Caco-2 (cell line): ENCODE measurements at regions of chr20 and their contacts with region 1.

Region 1: GRCh38 chr20:531608-532007 is 12.0 kb downstream of the CSNK2A1 start:
- DNase-seq: no peak
- H3K4me3 ChIP-seq: no peak overlapping the region
- H3K4me3 Mint-ChIP-seq: no peak overlapping the region
- H3K27ac Mint-ChIP-seq: no peak overlapping the region
- H3K4me1 ChIP-seq: peaks cover 31% of the 10 kb centered on the region
- H3K4me1 Mint-ChIP-seq: peaks cover 36% of the 10 kb centered on the region
- H3K27me3 ChIP-seq: no peaks in the 10 kb centered on the region
- H3K27me3 Mint-ChIP-seq: no peaks in the 10 kb centered on the region
- CTCF ChIP-seq: no peak

Region 2: DNA sequence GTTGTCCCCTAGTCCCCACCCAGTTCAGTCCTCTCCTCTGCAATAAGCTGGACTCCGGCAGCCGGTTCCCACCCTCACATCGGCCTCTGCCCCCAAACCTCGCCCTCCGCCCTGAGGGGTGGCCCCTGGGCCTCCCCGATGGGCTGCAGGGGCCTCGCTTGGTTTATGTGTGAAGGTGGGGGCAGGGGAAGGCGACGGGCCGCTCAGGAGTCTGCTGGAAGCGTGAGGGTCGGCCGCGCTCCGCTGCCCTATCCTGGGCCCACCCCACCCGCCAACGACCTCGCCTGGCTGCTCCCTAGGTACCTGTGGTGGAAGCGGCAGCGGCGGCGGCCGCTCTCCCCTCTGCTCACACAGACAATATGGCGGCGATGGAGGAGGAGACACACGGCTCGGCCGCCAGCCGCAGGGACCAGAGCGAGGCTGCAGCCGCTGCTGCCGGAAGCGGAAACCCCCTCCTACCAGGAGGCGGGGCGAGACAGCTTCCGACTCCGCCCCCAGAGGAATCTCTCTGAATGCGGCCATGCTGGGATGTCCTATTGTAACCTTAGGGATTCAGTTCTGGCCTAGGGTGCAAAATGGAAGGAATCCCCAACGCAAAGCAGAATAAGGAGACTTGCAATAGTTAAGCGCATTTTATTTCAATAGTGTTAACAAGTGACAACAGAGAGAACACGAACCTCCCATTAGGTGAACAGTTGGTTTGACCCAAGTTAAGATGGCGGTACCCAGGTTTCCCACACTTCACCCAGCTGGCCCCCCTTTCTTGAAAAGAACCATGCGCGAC is 12.0 kb after region 1 on chr20 and contains the start of gene CSNK2A1:
- CTCF ChIA-PET with region 1: no interaction called
- POLR2A ChIA-PET with region 1: no interaction called
- intact Hi-C with region 1: loop called (anchors 1 kb)
- DNase-seq: peak; percentile 96 to 97
- H3K4me3 ChIP-seq: peak within 1 kb of the TSS; percentile 96
- H3K4me3 Mint-ChIP-seq: peak within 1 kb of the TSS; percentile 78
- H3K27ac Mint-ChIP-seq: peak within 1 kb of the TSS; percentile 16
- H3K4me1 ChIP-seq: peaks cover 7% of the 10 kb centered on the region
- H3K4me1 Mint-ChIP-seq: peaks cover 23% of the 10 kb centered on the region
- H3K27me3 ChIP-seq: no peaks in the 10 kb centered on the region
- H3K27me3 Mint-ChIP-seq: peaks cover 7% of the 10 kb centered on the region
- CTCF ChIP-seq: no peak
- total RNA-seq, gene CSNK2A1: 188 and 205 TPM in 2 replicates

Region 3: DNA sequence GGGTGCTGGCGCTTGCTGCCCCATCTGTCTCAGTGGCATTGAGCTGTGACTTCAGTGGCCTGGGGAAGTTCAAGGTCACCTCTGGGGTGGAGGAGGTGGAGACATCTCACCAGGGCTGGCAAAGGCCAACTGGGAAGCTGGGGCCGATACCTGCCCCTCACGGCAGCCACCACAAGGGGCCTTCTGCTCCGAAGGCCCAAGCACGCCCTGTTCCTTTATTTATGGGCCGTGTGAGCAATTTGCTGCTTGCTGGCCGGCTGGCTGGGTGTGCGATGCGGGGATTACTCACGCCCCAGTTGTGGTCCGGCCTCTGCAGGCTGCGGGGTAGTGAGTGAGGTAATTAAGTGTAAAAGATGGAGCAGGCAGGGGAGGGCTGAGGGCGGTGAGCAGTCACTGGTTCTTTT is 157.2 kb after region 1 on chr20:
- CTCF ChIA-PET with region 1: no interaction called
- POLR2A ChIA-PET with region 1: no interaction called
- intact Hi-C with region 1: no loop called
- DNase-seq: no peak
- H3K4me3 ChIP-seq: no peak overlapping the region
- H3K4me3 Mint-ChIP-seq: no peak overlapping the region
- H3K27ac Mint-ChIP-seq: no peak overlapping the region
- H3K4me1 ChIP-seq: no peaks in the 10 kb centered on the region
- H3K4me1 Mint-ChIP-seq: no peaks in the 10 kb centered on the region
- H3K27me3 ChIP-seq: peaks cover 1% of the 10 kb centered on the region; the same call in 1 of the 2 replicates
- H3K27me3 Mint-ChIP-seq: peaks cover 17% of the 10 kb centered on the region
- CTCF ChIP-seq: no peak

Region 4: GRCh38 chr20:768426-768978 is 236.9 kb after region 1 on chr20 and contains the start of gene SLC52A3:
- CTCF ChIA-PET with region 1: no interaction called
- POLR2A ChIA-PET with region 1: no interaction called
- intact Hi-C with region 1: no loop called
- DNase-seq: peak; percentile 59 to 81
- H3K4me3 ChIP-seq: no peak within 1 kb of the TSS
- H3K4me3 Mint-ChIP-seq: no peak within 1 kb of the TSS
- H3K27ac Mint-ChIP-seq: no peak within 1 kb of the TSS
- H3K4me1 ChIP-seq: no peaks in the 10 kb centered on the region
- H3K4me1 Mint-ChIP-seq: peaks cover 14% of the 10 kb centered on the region
- H3K27me3 ChIP-seq: no peaks in the 10 kb centered on the region
- H3K27me3 Mint-ChIP-seq: peaks cover 4% of the 10 kb centered on the region
- CTCF ChIP-seq: peak; percentile 12 to 48
- total RNA-seq, gene SLC52A3: 0.50 and 0.56 TPM in 2 replicates